ENCODE measurements at regions of chr11 and their contacts with region 1.

Region 1: GRCh38 chr11:69683764-69684333 is 8.7 kb upstream of the LTO1 start:
- DNase-seq: peak in 1 of 7 donors; percentile 21
- H3K4me3 ChIP-seq: no peak overlapping the region
- H3K27ac ChIP-seq: no peak overlapping the region
- H3K4me1 ChIP-seq: no peaks in the 10 kb centered on the region
- H3K27me3 ChIP-seq: no peaks in the 10 kb centered on the region
- CTCF ChIP-seq: peak in 5 of 6 experiments; percentile 10 to 43 (median 29)
- POLR2A ChIP-seq: no peak

Region 2: DNA sequence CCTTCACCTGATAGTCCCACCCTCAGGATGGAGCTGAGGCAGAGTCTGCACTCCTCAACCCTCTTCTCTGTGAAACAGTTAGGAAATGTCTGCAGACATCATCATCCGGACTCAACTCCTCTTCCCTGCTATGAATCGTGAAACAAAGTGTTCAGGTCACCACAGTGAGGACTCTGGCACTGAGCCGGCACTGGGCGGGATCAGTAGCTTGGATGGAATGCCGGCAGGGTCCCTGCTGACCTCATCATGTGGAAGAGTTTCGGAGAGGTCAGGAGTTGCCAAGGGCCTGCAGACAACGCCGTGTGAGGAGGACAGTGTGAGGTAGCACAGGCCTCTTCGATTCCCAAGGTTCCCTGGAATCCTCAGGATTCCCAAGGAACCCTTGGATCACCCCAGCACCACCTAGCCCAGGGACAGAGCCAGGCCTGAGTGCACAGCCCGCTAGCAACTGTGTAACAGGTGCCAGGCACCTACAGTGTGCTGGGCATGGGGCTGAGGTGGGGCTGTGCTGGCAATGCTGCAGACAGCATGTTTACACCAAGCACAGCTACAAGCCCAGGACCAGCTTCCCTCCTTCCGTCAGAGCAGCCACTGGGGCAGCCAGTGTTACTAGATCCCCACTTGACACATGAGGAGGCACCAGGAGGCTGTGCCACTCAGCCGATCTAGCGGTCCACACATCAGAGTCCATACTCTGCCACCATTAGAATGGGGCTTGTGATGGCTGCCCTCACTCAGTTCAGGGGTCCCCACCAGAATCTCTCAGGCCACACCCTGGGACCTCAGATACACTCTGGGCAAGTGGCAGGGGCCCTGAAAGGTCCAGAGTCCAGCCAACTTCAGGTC is 203.1 kb before region 1 on chr11:
- intact Hi-C with region 1: no loop called
- DNase-seq: peak in 2 of 7 donors; percentile 14 to 42
- H3K4me3 ChIP-seq: no peak overlapping the region
- H3K27ac ChIP-seq: no peak overlapping the region
- H3K4me1 ChIP-seq: no peaks in the 10 kb centered on the region
- H3K27me3 ChIP-seq: no peaks in the 10 kb centered on the region
- CTCF ChIP-seq: no peak
- POLR2A ChIP-seq: no peak

Region 3: DNA sequence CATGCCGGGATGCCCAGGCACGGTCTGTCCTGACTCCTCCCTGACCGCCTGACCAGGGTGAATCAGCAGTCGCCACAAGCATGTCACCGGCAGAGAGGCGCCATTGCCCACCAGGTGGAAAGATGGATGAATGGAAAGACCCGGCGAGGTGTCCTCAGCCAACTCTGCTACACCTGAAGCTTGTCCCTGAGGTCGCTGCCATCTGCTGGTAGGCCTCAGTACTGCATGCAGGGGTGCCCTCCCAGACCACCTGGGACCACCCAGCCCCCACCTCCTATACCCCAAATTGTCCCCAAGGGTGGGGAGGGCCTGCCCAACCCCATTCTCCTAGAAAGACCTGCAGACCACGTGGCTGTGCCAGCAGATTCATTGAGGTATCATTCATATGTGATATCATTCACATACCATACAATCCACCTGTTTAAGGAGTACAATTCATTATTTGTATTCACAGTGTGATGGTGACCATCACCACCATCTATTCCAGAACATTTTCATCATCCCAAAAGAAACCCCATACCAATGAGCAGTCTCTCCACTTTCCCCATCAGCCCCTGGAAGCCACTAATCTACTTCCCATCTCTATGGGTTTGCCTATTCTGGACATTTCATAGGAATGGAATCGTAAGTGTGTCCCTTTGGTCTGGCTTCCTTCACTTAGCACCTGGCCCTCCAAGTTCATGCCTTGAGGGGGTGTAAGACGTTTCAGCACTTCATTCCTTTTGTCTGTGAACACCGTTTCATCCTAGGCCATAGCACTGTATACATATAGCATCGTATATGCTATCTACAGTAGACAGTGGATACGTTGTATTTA is 117.9 kb after region 1 on chr11:
- intact Hi-C with region 1: loop called in 1 of 2 experiments (anchors 5 kb)
- DNase-seq: peak in 5 of 7 donors; percentile 17 to 54 (median 26)
- H3K4me3 ChIP-seq: no peak overlapping the region
- H3K27ac ChIP-seq: no peak overlapping the region
- H3K4me1 ChIP-seq: no peaks in the 10 kb centered on the region
- H3K27me3 ChIP-seq: no peaks in the 10 kb centered on the region
- CTCF ChIP-seq: peak; percentile 30 to 57 (median 54)
- POLR2A ChIP-seq: no peak

Region 4: DNA sequence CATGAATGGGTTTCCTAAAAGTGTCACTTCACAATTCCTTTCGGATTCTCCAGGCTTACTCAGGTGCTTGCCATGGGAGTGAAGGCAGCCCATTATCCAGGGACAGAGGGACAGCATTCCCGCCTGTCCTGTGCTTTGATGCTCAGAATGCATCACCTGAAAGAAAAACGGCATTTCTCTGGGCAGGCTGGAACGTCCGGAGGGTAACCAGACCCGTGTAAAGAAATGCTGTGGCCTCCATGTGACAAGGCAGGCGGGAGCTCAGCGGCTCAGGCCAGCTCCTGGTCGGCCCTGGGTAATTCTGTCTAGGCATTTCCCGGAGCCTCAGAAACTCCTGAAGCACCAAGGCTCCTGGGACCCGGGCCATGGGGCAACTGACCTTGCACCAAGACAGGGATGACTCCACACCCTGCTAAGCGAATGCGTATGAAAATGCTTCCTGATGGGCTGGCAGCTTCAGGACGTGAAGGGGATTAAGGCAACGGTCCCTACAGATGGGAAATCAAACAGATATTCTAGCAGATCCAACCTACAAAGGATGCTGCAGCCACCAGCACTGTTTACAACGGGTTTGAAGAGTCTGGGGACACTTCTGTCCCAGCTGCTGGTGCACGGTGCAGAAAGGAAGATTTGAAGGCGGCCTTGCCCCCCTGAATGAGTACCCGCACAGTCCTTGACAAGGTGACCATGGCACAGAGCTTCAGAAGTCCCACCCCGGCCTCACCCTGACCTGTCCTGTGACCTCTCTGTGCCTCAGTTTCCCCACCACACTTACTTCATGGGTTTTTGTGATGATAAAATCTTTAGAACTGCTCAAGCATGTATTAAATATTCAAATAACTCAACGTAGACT is 148.9 kb after region 1 on chr11:
- intact Hi-C with region 1: no loop called
- DNase-seq: peak in 5 of 7 donors; percentile 27 to 46 (median 39)
- H3K4me3 ChIP-seq: no peak overlapping the region
- H3K27ac ChIP-seq: no peak overlapping the region
- H3K4me1 ChIP-seq: no peaks in the 10 kb centered on the region
- H3K27me3 ChIP-seq: peaks cover 22% of the 10 kb centered on the region
- CTCF ChIP-seq: no peak
- POLR2A ChIP-seq: no peak

Region 5: DNA sequence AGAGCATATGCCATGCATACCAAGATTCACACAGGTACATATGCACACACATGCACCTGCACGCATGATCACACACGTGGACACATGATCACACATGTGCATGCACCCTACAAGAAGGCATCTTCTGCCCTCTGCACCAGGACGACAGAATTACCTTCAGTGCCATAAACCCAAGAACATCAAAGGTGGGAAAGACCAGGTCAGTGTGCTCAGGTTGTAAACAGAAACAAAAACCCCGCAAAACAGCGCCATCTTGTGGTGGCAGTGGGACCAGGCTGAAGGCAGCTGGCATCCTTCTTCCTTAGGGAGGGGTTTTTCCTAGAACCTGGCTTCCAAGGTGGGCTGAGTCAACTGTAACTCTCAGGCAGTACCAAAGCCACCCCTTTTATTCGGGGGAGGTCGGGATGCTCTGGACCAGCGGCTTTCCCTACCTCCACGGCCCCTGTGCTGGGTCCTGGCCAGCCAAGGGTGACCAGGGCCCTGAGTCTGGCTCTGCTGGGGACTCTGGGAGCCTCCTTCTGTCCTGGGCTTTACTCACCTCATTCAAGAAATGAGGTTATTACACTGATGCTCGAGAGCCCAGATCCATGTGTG is 204.7 kb after region 1 on chr11:
- intact Hi-C with region 1: loop called (anchors 5 kb)
- DNase-seq: peak; percentile 54 to 85 (median 70)
- H3K4me3 ChIP-seq: no peak overlapping the region
- H3K27ac ChIP-seq: no peak overlapping the region
- H3K4me1 ChIP-seq: peaks cover 6 to 21% of the 10 kb centered on the region in 2 donors
- H3K27me3 ChIP-seq: no peaks in the 10 kb centered on the region
- CTCF ChIP-seq: peak; percentile 66 to 88 (median 79)
- POLR2A ChIP-seq: no peak

Region 6: DNA sequence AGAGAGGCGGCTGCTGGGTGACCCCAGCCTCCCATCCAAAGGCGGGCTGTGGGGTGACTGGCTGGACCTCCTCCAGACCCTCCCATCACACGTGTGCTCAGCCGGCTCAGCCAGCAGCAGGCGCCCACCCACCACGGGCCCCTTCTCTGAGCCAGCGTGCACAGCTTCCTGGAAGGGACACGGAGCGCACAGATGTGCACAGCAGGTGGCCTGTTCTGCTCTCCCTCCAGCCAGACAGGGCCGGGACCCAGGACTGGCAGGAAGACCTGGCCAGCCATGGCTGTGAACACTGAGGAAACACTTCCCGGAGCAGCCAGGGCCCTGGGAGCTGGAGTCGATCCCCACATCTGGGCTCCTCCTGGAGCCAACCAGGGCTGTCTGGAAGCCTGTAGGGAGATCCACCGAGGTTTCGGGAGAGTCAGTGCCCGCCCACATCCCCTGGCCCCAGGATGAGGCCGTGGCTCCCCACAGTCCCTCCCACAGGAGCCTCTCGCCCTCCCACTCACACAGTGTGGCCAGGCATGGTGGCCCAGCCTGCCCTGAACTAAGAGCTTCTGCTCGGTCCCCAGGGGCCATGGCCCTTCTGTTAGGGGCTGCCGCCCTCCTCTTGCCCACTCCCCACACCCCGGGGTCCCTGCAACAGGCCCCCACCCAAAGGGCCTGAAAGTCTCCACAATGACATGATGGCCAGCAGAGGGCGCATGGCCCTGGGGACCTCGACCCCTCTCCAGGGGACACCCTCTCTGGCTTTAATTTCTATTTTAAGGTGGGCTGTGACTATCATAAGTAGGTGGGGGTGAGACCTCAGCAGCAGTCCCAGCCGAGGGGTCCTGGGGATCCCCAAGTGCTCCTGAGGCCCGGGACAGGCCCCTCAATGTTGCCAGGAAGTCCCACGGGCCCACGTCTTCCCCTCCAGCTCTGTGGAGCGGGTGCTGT is 226.0 kb after region 1 on chr11:
- intact Hi-C with region 1: no loop called
- DNase-seq: peak in 1 of 7 donors; percentile 17
- H3K4me3 ChIP-seq: no peak overlapping the region
- H3K27ac ChIP-seq: no peak overlapping the region
- H3K4me1 ChIP-seq: peaks cover 10 to 12% of the 10 kb centered on the region in 2 donors
- H3K27me3 ChIP-seq: peaks cover 9% of the 10 kb centered on the region
- CTCF ChIP-seq: peak; percentile 25 to 55 (median 38)
- POLR2A ChIP-seq: no peak

Region 7: DNA sequence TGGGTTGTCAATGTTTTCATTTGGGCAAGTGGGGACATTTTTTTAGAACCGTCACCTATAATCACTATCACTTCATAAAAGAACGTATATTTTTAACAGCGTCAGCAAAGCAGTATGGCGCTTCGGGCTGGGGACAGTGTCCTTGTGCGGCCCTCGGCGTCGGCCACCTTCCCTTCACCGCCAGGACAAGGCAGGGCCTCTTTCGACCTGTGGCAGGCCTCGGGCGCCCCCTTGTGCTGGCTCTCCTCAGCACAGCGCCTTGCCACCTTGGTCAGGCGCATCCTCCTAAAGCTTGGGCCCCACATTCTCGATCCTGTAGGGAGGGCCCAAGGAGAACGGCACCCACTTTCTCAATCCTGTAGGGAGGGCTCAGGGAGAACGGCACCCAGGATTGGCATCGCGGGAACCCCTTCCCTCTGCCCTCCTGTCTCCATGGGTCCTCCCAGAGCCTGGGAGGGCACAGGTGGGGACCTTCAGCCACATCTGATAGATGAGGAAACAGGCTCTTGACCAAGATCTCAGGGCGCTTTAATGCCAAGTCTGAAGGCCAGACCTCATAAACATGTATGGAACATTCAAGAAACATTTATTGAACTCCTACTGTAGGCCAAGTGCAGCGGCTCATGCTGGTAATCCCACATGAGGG is 507.8 kb after region 1 on chr11:
- intact Hi-C with region 1: loop called (anchors 2 to 5 kb)
- DNase-seq: peak; percentile 69 to 87 (median 84)
- H3K4me3 ChIP-seq: no peak overlapping the region
- H3K27ac ChIP-seq: no peak overlapping the region
- H3K4me1 ChIP-seq: no peaks in the 10 kb centered on the region
- H3K27me3 ChIP-seq: no peaks in the 10 kb centered on the region
- CTCF ChIP-seq: peak; percentile 84 to 92 (median 86)
- POLR2A ChIP-seq: no peak